ENCODE measurements at regions of chr20 and their contacts with region 1.

Region 1: DNA sequence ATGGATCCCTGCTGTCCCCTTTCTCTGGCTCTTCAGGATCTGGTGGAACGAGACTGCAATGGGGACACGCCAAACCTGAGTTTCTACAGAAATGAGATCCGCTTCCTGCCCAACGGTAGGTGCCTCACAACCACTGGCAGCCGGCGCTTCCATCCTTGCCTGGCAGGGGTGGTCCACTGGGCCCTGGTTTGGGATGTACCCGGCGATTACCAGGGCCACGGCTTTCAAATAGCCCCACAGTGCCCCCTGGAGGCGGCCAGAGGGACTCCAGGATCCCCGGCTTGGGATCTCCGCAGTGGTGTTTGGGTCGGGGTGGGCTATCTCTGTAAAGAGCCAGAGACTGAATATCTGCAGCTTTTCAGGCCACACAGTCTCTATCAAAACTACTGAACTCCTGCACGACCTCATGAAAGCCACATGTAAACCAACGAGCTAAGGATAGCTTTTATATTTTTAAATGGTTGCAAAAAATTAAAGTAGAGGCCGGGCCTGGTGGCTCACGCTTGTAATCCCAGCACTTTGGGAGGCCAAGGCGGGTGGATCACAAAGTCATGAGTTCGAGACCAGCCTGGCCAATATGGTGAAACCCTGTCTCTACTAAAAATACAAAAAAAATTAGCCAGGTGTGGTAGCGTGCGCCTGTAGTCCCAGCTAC is 3.7 kb downstream of the OGFR start:
- DNase-seq: no peak
- H3K4me3 ChIP-seq: no peak overlapping the region
- H3K27ac ChIP-seq: no peak overlapping the region
- H3K27me3 ChIP-seq: no peaks in the 10 kb centered on the region
- CTCF ChIP-seq: peak; percentile 94

Region 2: GRCh38 chr20:62501801-62502495 is 306.4 kb before region 1 on chr20:
- CTCF ChIA-PET with region 1: no interaction called
- POLR2A ChIA-PET with region 1: no interaction called
- DNase-seq: no peak
- H3K4me3 ChIP-seq: no peak overlapping the region
- H3K27ac ChIP-seq: no peak overlapping the region
- H3K27me3 ChIP-seq: peaks cover 5% of the 10 kb centered on the region
- CTCF ChIP-seq: no peak

Region 3: GRCh38 chr20:62561182-62561581 is 247.2 kb before region 1 on chr20:
- CTCF ChIA-PET with region 1: no interaction called
- POLR2A ChIA-PET with region 1: no interaction called
- DNase-seq: no peak
- H3K4me3 ChIP-seq: no peak overlapping the region
- H3K27ac ChIP-seq: no peak overlapping the region
- H3K27me3 ChIP-seq: peaks cover 25% of the 10 kb centered on the region
- CTCF ChIP-seq: no peak

Region 4: DNA sequence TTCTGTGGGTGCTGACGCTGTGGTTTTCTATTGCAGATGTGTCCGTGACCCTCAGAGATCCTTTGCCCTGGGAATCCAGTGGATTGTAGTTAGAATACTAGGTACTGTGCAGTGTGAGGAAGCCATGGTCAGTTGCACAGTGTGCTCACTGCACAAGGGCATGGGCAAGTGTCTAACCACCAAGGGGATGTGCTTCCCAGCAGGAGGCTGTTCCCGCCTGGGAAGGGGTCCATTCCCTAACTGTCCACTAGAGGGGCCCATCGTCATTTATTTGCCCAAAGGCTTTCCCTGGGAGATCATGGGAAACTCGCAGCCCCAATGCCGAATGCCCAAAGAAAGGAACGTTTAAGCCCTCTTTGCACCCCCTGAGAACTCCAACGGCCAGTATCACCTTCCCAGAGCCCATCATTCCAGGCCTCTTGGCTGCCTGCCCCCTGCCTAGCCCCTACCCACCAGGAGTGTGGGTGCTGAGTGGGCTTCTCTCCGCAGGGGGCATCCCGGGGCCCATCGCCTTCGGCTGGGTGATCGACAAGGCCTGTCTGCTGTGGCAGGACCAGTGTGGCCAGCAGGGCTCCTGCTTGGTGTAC is 139.8 kb before region 1 on chr20:
- CTCF ChIA-PET with region 1: interaction called, 11 read pairs
- POLR2A ChIA-PET with region 1: no interaction called
- DNase-seq: peak; percentile 54
- H3K4me3 ChIP-seq: no peak overlapping the region
- H3K27ac ChIP-seq: no peak overlapping the region
- H3K27me3 ChIP-seq: peaks cover 3% of the 10 kb centered on the region
- CTCF ChIP-seq: peak; percentile 97

Region 5: DNA sequence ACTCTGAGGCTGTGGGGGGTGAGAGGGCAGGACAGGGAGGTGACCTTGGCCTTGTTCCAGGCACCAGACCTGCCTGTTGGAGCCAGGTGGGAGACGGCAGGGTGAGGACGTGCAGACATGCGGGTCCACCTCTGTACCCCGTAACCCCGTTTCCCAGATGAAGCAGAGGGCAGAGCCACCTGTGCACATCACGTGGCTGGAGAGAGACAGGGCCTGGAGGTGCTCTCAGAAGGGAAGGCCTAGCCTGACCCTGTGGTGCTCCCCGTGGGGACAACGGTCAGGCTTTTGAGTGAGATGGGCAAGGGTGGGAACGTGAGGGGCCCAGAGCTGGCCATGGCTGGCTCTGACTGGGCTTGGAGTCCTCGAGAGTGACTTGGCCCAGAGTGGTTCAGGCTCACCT is 93.1 kb before region 1 on chr20:
- CTCF ChIA-PET with region 1: no interaction called
- POLR2A ChIA-PET with region 1: no interaction called
- DNase-seq: no peak
- H3K4me3 ChIP-seq: no peak overlapping the region
- H3K27ac ChIP-seq: no peak overlapping the region
- H3K27me3 ChIP-seq: peaks cover 50% of the 10 kb centered on the region
- CTCF ChIP-seq: no peak

Region 6: GRCh38 chr20:62846188-62846890 is 38.0 kb after region 1 on chr20:
- CTCF ChIA-PET with region 1: interaction called, 10 read pairs
- POLR2A ChIA-PET with region 1: no interaction called
- DNase-seq: no peak
- H3K4me3 ChIP-seq: no peak overlapping the region
- H3K27ac ChIP-seq: no peak overlapping the region
- H3K27me3 ChIP-seq: no peaks in the 10 kb centered on the region
- CTCF ChIP-seq: no peak

Region 7: DNA sequence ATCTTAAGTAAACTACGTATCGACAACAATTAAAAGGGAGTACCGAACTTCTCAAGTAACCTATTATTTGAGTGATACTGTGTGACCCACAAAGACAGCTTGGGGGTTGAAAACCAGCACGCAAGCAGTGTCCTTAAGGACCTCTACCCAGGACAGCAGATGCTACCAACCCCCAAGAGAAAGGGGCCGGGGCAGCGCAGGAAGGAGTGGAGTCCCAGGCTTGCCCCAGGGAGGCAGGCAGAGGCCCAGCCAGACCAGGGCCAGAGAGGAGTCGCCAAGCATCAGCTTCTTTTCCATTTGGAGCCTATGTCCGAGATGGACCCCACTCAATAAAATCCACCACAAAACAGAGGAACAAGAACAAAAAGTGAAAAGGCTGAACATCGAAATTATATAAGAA is 106.1 kb after region 1 on chr20:
- CTCF ChIA-PET with region 1: interaction called, 10 read pairs
- POLR2A ChIA-PET with region 1: no interaction called
- DNase-seq: no peak
- H3K4me3 ChIP-seq: no peak overlapping the region
- H3K27ac ChIP-seq: no peak overlapping the region
- H3K27me3 ChIP-seq: no peaks in the 10 kb centered on the region
- CTCF ChIP-seq: no peak

Region 8: DNA sequence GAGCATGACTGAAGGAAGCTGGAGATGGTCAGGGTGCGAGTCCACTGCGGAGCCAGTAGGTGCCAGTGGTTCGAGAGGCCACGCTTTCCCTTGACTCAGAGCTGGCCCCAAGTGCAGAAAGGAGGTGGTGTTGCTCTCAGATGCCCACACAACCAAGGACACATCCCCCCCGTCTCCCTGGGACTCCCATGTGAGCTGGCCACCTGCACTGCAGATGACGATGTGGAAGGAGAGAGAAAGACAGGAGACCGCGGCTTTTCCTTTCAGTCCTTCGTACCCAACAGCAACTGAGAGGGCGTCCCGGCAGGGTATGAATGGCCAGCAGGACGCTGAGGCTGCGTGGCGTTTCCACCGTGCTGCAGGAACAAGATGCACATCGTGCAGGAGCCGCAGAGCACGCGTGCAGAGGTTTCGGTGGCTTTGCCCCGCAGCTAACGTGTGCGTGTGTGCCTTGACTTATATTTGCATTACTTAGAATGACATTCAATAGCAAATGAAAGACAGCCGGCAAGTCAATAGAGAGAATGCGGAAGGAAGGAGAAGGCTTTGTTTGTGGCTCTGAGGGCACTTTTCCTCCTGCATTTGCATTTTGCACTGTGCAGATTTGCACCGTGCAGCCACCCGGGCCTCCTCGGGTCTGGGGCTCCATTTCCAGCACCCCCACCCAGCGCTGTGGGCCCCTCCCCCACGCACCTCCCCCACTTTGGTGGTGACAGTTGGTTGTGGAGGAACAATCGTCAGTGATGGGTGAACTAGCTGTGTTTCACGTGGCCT is 224.7 kb after region 1 on chr20:
- CTCF ChIA-PET with region 1: no interaction called
- POLR2A ChIA-PET with region 1: no interaction called
- DNase-seq: no peak
- H3K4me3 ChIP-seq: no peak overlapping the region
- H3K27ac ChIP-seq: no peak overlapping the region
- H3K27me3 ChIP-seq: peaks cover 58% of the 10 kb centered on the region
- CTCF ChIP-seq: no peak